ENCODE measurements at regions of chr21 and their contacts with region 1.

Region 1: GRCh38 chr21:32940079-32941014 is 85.4 kb upstream of the OLIG2 start:
- DNase-seq: peak in 4 of 10 donors; percentile 19 to 59 (median 34)
- H3K4me3 ChIP-seq: peak overlapping the region in 14 of 59 donors; percentile 3 to 45 (median 29)
- H3K27ac ChIP-seq: peak overlapping the region in 11 of 59 donors; percentile 8 to 64 (median 45)
- H3K27me3 ChIP-seq: peaks cover 0 to 13% (median 0%) of the 10 kb centered on the region in 45 donors
- CTCF ChIP-seq: peak; percentile 48 to 95 (median 82)

Region 2: DNA sequence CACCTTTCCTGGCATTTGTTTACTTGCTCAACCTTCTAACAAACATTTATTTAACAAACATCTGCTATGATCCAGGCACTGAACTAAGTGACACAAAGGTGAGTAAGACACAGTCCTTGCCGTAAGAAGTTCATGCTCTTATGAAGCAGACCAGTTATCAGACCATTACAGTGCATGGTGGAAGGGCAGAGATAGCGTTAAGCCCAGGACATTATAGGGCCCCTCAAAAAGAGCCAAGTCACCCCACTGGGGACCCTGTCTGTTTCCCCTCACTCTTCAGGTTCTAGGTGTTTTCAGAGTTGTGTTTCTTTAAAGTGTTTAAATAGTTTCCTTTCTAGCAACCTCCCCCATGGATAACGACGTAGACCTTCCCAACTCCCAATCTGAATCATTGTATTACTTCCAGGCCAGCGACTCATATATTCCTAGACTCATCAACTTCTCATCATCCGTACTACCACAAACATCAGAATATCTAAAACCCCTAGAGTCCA is 394.4 kb before region 1 on chr21:
- intact Hi-C with region 1: no loop called
- DNase-seq: no peak
- H3K4me3 ChIP-seq: no peak overlapping the region
- H3K27ac ChIP-seq: no peak overlapping the region
- H3K27me3 ChIP-seq: no peaks in the 10 kb centered on the region
- CTCF ChIP-seq: no peak

Region 3: DNA sequence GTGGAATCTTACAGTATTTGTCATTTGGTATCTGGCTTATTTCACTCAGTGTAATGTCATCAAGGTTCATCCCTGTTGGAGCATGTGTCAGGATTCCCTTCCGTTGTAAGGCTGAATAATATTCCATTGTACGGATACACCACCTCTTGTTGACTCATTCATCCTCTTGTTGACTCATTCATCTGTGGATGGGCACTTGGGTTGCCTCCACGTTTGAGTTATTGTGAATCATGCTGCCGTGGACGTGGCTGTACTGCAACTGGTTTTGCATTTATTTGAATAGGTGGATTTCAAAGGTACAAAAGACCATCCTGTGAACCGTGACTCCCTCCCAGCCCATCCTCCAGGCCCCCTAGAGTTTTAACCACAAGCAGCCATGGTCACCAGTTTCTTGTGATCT is 343.1 kb before region 1 on chr21:
- intact Hi-C with region 1: no loop called
- DNase-seq: no peak
- H3K4me3 ChIP-seq: no peak overlapping the region
- H3K27ac ChIP-seq: peak overlapping the region in 1 of 59 donors; percentile 28
- H3K27me3 ChIP-seq: no peaks in the 10 kb centered on the region
- CTCF ChIP-seq: no peak

Region 4: DNA sequence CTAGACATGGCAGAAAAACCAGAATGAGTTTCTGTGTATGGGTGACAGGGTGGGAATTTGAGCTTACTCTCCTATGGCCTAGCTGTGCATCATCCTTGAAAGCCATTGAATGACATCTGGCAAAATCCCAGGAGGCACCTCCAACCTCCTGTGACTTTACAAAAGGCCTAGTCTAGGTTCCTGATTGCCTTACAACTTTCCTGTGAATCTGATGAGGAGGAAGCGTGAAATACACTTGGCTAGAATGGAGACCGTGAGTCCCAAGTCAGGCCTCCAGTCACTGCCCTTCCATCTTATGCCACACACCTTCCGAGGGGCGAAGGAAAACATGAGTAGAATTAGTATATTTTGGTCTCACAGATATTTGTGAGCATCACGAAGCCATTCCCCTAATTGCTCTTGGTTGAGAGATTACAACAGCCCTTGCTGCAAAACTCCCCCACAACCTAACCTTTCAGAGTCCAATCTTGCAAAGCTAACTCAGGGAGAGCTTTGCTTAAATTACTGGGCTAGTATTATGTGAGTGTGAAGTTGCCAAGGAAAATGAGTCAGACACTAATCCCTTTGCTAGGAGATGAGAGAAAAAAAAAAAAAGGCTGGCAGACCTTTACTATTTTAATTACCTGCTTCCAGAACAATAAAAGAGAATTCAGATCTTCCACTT is 132.5 kb before region 1 on chr21:
- intact Hi-C with region 1: no loop called
- DNase-seq: no peak
- H3K4me3 ChIP-seq: no peak overlapping the region
- H3K27ac ChIP-seq: peak overlapping the region in 6 of 59 donors; percentile 1 to 74 (median 12)
- H3K27me3 ChIP-seq: no peaks in the 10 kb centered on the region
- CTCF ChIP-seq: no peak

Region 5: GRCh38 chr21:32844653-32845436 is 95.5 kb before region 1 on chr21:
- intact Hi-C with region 1: loop called in 1 of 2 experiments (anchors 5 kb)
- DNase-seq: no peak
- H3K4me3 ChIP-seq: no peak overlapping the region
- H3K27ac ChIP-seq: no peak overlapping the region
- H3K27me3 ChIP-seq: no peaks in the 10 kb centered on the region
- CTCF ChIP-seq: no peak

Region 6: DNA sequence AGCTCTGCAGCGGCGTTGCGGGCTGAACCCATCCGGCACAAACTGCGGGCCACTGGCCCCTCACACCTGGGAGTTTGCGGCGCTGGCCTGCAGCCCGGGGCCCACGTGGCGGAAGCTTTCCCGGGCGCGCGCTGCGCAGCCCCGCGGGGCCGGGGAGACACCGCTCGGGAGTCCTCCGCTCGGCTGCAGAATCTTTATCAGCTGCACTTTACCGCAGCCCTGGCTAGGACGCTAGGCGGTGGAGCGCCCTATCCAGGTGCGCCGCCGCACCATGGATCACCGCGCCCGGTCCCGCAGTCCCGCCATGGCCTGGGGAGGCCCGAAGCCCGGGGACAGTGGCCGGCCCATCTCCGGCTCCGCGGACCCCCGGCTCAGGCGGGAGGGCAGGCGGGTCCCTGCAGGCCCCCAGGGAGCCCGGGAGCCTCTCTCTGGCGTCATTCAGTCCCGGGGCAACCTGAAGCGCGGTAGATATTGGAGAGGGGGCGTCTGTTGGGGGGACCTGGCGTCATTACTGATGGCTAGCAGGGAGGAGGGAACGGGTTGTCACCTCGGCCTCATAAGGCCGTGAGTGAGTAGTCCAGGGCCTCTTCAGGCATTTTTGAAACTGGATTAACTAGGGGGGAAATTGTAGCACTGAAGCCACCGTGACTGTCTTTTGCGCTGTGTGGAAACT is 79.7 kb after region 1 on chr21:
- intact Hi-C with region 1: loop called (anchors 5 to 10 kb)
- DNase-seq: no peak
- H3K4me3 ChIP-seq: peak overlapping the region in 58 of 59 donors; percentile 6 to 66 (median 44)
- H3K27ac ChIP-seq: peak overlapping the region in 5 of 59 donors; percentile 4 to 71 (median 25)
- H3K27me3 ChIP-seq: peaks cover 0 to 88% (median 59%) of the 10 kb centered on the region in 45 donors
- CTCF ChIP-seq: peak in 1 of 56 donors; percentile 6

Region 7: DNA sequence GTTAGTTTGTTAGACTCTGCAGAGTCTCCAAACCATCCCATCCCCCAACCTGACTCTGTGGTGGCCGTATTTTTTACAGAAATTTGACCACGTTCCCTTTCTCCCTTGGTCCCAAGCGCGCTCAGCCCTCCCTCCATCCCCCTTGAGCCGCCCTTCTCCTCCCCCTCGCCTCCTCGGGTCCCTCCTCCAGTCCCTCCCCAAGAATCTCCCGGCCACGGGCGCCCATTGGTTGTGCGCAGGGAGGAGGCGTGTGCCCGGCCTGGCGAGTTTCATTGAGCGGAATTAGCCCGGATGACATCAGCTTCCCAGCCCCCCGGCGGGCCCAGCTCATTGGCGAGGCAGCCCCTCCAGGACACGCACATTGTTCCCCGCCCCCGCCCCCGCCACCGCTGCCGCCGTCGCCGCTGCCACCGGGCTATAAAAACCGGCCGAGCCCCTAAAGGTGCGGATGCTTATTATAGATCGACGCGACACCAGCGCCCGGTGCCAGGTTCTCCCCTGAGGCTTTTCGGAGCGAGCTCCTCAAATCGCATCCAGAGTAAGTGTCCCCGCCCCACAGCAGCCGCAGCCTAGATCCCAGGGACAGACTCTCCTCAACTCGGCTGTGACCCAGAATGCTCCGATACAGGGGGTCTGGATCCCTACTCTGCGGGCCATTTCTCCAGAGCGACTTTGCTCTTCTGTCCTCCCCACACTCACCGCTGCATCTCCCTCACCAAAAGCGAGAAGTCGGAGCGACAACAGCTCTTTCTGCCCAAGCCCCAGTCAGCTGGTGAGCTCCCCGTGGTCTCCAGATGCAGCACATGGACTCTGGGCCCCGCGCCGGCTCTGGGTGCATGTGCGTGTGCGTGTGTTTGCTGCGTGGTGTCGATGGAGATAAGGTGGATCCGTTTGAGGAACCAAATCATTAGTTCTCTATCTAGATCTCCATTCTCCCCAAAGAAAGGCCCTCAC is 85.4 kb after region 1 on chr21 and contains the start of gene OLIG2:
- intact Hi-C with region 1: loop called (anchors 5 to 10 kb)
- DNase-seq: peak; percentile 46 to 96 (median 95)
- H3K4me3 ChIP-seq: peak within 1 kb of the TSS; percentile 35 to 82 (median 61)
- H3K27ac ChIP-seq: peak within 1 kb of the TSS; percentile 40 to 93 (median 86)
- H3K27me3 ChIP-seq: peaks cover 0 to 100% (median 92%) of the 10 kb centered on the region in 45 donors
- CTCF ChIP-seq: peak in 1 of 56 donors; percentile 17
- total RNA-seq, gene OLIG2: 13.9 to 165 (median 45.4) TPM